Posterior vena cava (tissue), 2 donors: ENCODE measurements at regions of chr1 and their contacts with region 1.

Region 1: GRCh38 chr1:198970912-198971311 is 332.1 kb downstream of the PTPRC start:
- DNase-seq: no peak

Region 2: DNA sequence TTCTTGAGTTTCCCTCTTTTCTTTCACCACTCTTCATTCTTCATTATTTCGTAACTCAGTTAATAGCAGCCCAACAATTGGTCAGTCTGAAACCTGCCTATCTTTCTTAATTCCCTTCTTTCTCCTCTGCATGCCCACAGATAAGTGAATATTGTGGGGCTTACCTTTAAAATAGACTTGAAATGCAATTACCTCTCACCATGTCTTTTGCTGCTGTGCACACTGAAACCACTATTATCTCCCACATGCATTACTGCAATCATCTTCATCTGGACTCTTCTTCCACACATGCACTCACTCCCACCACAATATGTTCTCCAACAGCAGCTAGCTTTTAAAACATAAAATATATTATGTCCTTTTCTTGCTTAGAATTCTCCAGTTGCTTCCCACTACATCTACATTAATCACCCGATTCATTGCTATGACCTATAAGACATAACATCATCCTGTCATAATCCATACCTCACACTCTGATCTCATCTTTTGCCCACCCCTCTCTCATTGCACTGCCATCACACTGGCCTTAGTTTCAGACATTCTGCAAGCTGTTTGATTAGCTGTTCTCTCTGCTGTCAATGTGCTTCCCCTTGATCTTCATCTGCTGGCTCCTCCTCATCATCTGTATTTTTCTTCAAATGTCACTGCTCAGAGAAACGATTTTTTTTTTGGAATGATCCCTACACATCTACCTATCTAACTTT is 27.3 kb before region 1 on chr1:
- intact Hi-C with region 1: loop called in 1 of 2 experiments (anchors 1 kb)
- DNase-seq: no peak